H1 (cell line): ENCODE measurements at regions of chr1 and their contacts with region 1.

Region 1: DNA sequence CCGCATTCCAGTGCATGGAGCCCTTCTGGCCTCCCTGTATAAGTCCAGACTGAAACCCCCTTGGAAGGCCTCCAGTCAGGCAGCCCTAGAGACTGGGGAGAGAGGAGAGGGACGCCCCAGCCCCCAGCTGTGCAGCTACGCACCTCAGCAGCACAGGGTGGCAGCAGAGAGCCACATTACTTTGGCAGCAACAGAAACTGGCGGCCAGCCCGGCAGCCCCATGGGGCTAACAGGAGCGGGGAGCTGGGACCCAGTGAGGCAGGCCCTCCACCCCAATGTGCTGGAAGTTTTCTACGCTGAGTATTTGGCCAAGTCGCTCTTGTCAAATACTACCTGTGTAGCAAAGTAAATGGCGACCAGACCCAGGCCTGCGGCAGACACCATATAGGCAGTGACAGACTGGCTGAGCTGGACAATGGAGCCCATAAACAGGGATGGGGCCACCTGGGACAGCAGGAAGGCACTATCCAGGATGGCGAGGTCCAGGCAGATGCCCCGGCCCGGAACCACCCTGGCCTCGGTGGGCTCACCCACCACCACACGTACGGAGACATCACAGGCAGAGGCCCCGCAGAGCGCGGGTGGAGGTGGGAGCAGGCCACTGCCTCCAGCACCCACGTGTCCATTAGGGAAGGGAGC is 21.2 kb downstream of the SLC45A3 start:
- DNase-seq: peak in 1 of 2 experiments; percentile 94
- H3K4me3 ChIP-seq: no peak overlapping the region
- H3K27ac ChIP-seq: no peak overlapping the region
- H3K4me1 ChIP-seq: peaks cover 0 to 10% (median 5%) of the 10 kb centered on the region in 4 experiments; a peak in 5 of 7 replicates
- H3K27me3 ChIP-seq: no peaks in the 10 kb centered on the region; a peak in 1 of 7 replicates
- CTCF ChIP-seq: peak; percentile 91 to 97 (median 94)
- EP300 ChIP-seq: no peak
- POLR2A ChIP-seq: no peak
- RAD21 ChIP-seq: peak; percentile 96 to 99

Region 2: DNA sequence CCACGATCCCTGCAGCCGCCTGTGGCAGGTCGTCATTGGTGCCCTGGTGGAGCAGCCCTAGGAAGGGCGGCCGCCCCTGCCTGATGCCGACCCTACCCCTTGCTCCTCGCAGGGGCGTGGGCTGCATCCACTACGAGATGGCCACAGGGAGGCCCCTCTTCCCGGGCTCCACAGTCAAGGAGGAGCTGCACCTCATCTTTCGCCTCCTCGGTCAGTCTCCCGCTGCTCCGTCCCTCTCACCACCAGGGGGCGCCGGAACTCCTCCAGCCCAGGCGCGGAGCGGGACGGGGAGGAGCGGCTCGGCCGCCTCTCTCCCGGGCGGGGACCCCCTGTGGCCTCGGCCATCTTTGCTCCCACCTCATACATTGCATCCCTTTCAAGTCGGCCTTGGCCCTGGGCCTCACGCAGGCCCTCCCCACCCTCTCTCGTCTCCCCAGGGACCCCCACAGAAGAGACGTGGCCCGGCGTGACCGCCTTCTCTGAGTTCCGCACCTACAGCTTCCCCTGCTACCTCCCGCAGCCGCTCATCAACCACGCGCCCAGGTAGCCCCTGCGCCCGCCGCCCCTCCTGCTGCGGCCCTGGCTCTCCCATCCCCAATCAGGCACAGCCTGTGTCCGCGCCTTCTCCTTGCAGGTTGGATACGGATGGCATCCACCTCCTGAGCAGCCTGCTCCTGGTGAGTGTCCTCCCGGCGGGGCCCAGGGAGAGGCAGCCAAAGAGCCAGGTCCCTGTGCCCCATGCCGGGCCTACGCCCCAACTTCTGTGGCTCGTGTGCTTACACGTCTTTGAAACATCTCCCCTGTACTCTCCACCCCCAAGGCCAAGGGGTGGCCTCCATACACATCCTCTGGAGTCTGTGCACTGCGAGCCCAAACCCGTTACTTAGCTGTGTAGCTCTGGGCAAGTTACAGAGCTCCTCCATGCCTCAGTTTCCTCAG is 129.9 kb before region 1 on chr1:
- CTCF ChIA-PET with region 1: interaction called, 38 read pairs
- POLR2A ChIA-PET with region 1: no interaction called
- DNase-seq: peak; percentile 56 to 100
- H3K4me3 ChIP-seq: peak overlapping the region in 2 of 4 experiments; percentile 19 to 26; a peak in 3 of 8 replicates
- H3K27ac ChIP-seq: no peak overlapping the region
- H3K4me1 ChIP-seq: peaks cover 0 to 10% (median 2%) of the 10 kb centered on the region in 4 experiments; a peak in 4 of 7 replicates
- H3K27me3 ChIP-seq: no peaks in the 10 kb centered on the region; a peak in 1 of 7 replicates
- CTCF ChIP-seq: peak in 2 of 3 experiments; percentile 85 to 94; a peak in 3 of 4 replicates
- EP300 ChIP-seq: no peak; a peak in 1 of 3 replicates
- POLR2A ChIP-seq: no peak
- RAD21 ChIP-seq: peak; percentile 77 to 88

Region 3: GRCh38 chr1:205584732-205585131 is 74.3 kb before region 1 on chr1:
- CTCF ChIA-PET with region 1: interaction called, 322 read pairs
- POLR2A ChIA-PET with region 1: interaction called, 6 read pairs
- DNase-seq: peak in 1 of 2 experiments; percentile 68
- H3K4me3 ChIP-seq: no peak overlapping the region
- H3K27ac ChIP-seq: no peak overlapping the region
- H3K4me1 ChIP-seq: peaks cover 0 to 5% (median 1%) of the 10 kb centered on the region in 4 experiments; a peak in 5 of 7 replicates
- H3K27me3 ChIP-seq: peaks cover 0 to 2% (median 0%) of the 10 kb centered on the region in 4 experiments; a peak in 2 of 7 replicates
- CTCF ChIP-seq: peak; percentile 33 to 54 (median 47)
- EP300 ChIP-seq: no peak
- POLR2A ChIP-seq: no peak
- RAD21 ChIP-seq: peak; percentile 13 to 46; a peak in 3 of 4 replicates

Region 4: DNA sequence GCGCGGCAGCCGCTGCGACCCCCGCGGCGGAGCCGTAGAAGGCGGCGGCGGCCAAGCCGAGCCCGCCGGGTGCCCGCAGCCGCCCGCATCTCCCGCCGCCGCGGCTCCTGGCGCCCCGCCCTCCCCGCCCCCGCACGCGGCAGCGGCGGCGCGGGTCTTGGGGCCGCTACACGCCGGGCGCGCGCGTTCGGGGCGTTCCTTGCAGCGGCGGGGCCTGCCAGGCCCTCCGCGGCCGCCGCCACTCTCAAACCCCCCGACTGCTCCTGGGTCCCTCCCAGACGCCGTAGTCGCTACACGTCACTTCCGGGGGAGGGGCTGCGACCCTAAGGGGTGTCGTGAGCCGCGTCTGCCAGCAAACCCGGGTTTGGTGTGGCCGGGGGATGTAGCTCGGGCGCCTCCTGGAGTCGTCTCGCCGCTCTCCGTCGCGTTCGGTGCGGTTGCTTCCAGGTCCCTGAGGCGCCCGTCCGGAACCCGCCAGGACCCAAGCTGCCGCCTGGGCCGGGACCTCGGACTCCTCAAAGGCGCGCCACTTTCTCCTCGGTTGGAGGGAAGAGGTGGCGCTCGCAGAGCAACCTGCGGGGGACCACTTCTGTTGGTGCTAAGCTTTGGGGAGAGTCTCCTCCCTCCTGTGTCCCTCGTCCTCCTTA is 27.2 kb before region 1 on chr1 and contains the start of gene ELK4:
- CTCF ChIA-PET with region 1: interaction called, 282 read pairs
- POLR2A ChIA-PET with region 1: interaction called, 27 read pairs
- DNase-seq: peak; percentile 91 to 99
- H3K4me3 ChIP-seq: peak within 1 kb of the TSS; percentile 72 to 90 (median 78)
- H3K27ac ChIP-seq: peak within 1 kb of the TSS; percentile 93
- H3K4me1 ChIP-seq: no peaks in the 10 kb centered on the region; a peak in 2 of 7 replicates
- H3K27me3 ChIP-seq: no peaks in the 10 kb centered on the region
- CTCF ChIP-seq: peak; percentile 64 to 71 (median 65)
- EP300 ChIP-seq: peak in 1 of 2 experiments; percentile 14; a peak in 1 of 3 replicates
- POLR2A ChIP-seq: peak; percentile 83 to 95
- RAD21 ChIP-seq: peak; percentile 74 to 75
- total RNA-seq, gene ELK4: 23.3 and 26.3 TPM in 2 replicates

Region 5: DNA sequence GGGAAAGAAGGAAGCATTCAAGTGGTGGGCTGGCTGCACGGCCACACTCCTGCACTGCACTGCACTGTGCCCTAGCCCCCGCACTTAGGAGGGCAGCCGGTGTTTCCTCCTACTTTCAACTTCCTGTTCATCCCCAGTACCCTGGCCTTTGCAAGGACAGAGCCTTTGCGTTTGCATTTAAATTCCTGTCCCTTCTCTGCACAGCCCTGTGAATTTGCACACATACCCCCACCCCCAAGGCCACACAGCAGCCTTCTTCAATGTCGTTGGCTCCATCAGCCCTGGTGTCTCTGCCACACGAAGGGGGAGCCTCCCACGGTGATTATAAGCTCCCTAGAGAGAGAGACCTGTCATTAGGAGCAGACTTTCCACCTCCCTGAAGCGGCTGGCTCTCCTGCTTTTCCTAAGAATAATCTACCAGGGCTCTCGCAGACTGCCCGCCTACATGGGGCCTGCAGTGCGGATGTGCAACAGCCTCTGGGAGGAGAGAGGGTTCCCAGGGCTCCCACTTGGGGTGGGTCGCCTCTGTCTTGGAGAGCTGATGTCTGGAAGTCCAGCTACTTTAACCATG is 34.4 kb after region 1 on chr1:
- CTCF ChIA-PET with region 1: interaction called, 168 read pairs
- POLR2A ChIA-PET with region 1: interaction called, 4 read pairs
- DNase-seq: no peak
- H3K4me3 ChIP-seq: no peak overlapping the region
- H3K27ac ChIP-seq: no peak overlapping the region
- H3K4me1 ChIP-seq: peaks cover 4 to 8% (median 5%) of the 10 kb centered on the region in 4 experiments; a peak in 6 of 7 replicates
- H3K27me3 ChIP-seq: no peaks in the 10 kb centered on the region
- CTCF ChIP-seq: no peak
- EP300 ChIP-seq: no peak
- POLR2A ChIP-seq: no peak
- RAD21 ChIP-seq: no peak

Region 6: DNA sequence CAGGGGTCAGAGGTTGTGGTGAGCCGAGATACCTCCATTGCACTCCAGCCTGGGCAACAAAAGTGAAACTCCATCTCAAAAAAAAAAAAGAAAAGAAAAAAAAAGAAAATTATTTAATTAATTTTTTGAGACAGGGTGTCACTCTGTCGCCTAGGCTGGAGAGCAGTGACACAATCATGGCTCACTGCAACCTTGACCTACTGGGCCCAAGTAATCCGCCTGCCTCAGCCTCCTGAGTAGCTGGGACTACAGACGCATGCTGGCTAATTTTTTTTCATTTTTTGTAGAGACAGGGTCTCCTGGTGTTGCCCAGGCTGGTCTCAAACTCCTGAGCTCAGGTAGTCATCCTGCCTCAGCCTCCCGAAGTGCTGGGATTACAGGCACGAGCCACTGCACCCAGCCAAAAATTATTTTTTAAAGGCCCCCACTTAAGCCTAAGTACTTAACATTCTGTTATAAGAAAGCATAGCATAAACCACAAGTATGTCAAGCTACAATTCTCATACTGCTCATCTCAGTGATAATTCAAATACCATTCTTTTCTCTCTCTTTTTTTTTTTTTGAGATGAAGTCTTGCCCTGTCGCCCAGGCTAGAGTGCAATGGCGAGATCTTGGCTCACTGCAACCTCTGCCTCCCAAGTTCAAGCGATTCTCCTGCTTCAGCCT is 71.0 kb after region 1 on chr1:
- CTCF ChIA-PET with region 1: interaction called, 43 read pairs
- POLR2A ChIA-PET with region 1: no interaction called
- DNase-seq: no peak
- H3K4me3 ChIP-seq: no peak overlapping the region
- H3K27ac ChIP-seq: no peak overlapping the region
- H3K4me1 ChIP-seq: no peaks in the 10 kb centered on the region
- H3K27me3 ChIP-seq: no peaks in the 10 kb centered on the region
- CTCF ChIP-seq: no peak
- EP300 ChIP-seq: no peak
- POLR2A ChIP-seq: no peak
- RAD21 ChIP-seq: no peak

Region 7: GRCh38 chr1:205791568-205792180 is 132.6 kb after region 1 on chr1:
- CTCF ChIA-PET with region 1: interaction called, 10 read pairs
- POLR2A ChIA-PET with region 1: no interaction called
- DNase-seq: peak in 1 of 2 experiments; percentile 70
- H3K4me3 ChIP-seq: no peak overlapping the region
- H3K27ac ChIP-seq: no peak overlapping the region
- H3K4me1 ChIP-seq: no peaks in the 10 kb centered on the region
- H3K27me3 ChIP-seq: no peaks in the 10 kb centered on the region
- CTCF ChIP-seq: peak; percentile 82 to 84 (median 84)
- EP300 ChIP-seq: no peak
- POLR2A ChIP-seq: no peak
- RAD21 ChIP-seq: peak; percentile 93 to 95